Head of caudate nucleus (tissue), 42 donors: ENCODE measurements at regions of chr9 and their contacts with region 1.

Region 1: GRCh38 chr9:35790385-35791296 is 750 bp upstream of the NPR2 start:
- DNase-seq: peak; percentile 43 to 91 (median 76)

Region 2: DNA sequence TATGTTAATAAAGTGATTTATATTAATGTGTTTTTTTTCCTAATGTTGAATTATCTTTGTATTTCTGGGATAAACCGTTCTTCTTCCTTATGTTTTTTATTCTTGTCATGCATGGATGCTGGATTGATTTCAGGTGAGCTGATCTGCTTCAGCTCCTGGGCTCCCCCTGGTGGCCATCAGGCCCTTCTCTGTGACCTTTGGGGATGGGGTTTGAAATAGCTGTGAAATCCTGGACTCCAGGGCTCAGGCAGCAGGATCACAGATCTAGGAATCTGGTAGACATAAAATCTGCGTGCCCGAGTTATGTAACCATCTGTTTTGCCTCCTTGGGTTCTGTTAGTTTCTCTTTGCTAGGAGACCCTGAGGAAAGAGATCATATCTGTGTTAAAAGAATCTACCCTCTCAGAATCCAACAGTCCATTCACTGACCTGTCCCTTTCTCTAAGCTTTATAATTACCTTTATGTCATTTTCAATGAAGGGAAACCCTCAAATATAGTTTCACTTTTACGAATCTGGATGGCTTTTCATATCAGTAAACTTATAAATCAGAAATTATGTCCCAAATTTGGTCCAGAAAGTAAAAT is 91.7 kb after region 1 on chr9:
- intact Hi-C with region 1: loop called (anchors 5 kb)
- DNase-seq: peak; percentile 73 to 95 (median 90)